Mammary epithelial cell (primary cell): ENCODE measurements at regions of chrX and their contacts with region 1.

Region 1: GRCh38 chrX:9745417-9746115 is 20.1 kb downstream of the GPR143 start:
- DNase-seq: no peak
- H3K4me3 ChIP-seq: no peak overlapping the region
- H3K27ac ChIP-seq: no peak overlapping the region
- H3K4me1 ChIP-seq: peaks cover 5% of the 10 kb centered on the region
- H3K27me3 ChIP-seq: no peaks in the 10 kb centered on the region
- CTCF ChIP-seq: no peak

Region 2: DNA sequence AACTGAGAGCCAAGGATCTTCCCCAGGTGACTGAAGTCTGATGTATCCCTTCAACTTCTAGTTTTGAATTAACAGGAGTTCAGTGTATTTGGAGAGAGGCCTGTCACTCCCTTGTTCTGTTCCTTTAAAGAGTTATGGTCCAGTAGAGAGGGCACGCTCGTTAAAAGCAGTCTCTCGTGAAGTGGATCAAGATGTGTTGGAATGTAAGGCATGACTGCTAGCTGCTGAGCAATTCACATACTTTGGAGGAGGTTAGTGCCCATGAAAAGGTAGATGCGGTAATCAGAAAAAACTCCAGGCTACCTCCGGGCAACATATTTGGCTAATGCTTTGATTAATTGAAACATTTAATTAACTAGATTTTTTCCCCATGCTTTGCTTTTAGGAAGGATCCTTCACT is 106.3 kb after region 1 on chrX:
- CTCF ChIA-PET with region 1: no interaction called
- dilution Hi-C with region 1: loop called (anchors 5 kb)
- in situ Hi-C with region 1: no loop called
- intact Hi-C with region 1: no loop called
- DNase-seq: no peak
- H3K4me3 ChIP-seq: no peak overlapping the region
- H3K27ac ChIP-seq: no peak overlapping the region
- H3K4me1 ChIP-seq: peaks cover 7% of the 10 kb centered on the region
- H3K27me3 ChIP-seq: no peaks in the 10 kb centered on the region
- CTCF ChIP-seq: no peak